ENCODE measurements at regions of chr20 and their contacts with region 1.

Region 1: DNA sequence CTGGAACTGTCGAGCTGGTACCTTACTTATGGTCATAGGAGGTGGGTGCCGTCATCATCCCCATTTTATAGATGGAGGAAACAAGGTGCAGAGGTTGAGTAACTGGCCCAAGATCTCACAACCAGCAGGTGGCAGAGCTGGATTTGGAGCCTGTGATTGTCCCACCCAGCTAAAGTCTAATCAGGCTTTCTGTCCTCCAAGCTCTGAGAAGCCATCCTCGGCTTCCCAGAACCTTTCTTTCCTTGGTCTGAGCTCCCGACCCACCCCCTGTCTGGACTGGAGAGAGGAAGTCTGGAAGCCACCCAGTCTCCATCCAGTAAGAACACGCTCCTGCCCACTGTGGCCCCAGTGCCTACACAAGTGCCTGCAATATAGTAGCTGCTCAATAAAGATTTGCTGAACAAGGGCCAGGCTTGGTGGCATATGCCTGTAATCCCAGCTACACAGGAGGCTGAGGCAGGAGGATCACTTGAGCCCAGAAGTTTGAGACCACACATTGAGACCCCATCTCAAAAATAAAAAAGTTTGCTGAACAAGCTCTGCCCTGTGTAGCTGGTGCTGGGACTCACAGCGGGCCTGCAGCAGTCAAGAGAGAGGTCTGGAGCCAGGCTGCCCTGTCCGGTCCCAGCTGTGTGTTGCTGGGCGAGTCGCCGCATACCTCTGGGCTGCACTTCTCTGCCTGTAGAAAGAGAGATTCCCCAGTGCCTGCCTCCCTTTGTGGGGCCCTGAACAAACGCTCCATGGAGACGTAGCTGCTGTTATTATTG is 32.5 kb upstream of the DLGAP4 start:
- DNase-seq: peak; percentile 27
- ATAC-seq: no peak
- H3K4me3 Mint-ChIP-seq: no peak overlapping the region
- H3K27ac Mint-ChIP-seq: no peak overlapping the region
- H3K4me1 Mint-ChIP-seq: no peaks in the 10 kb centered on the region
- H3K27me3 Mint-ChIP-seq: no peaks in the 10 kb centered on the region

Region 2: DNA sequence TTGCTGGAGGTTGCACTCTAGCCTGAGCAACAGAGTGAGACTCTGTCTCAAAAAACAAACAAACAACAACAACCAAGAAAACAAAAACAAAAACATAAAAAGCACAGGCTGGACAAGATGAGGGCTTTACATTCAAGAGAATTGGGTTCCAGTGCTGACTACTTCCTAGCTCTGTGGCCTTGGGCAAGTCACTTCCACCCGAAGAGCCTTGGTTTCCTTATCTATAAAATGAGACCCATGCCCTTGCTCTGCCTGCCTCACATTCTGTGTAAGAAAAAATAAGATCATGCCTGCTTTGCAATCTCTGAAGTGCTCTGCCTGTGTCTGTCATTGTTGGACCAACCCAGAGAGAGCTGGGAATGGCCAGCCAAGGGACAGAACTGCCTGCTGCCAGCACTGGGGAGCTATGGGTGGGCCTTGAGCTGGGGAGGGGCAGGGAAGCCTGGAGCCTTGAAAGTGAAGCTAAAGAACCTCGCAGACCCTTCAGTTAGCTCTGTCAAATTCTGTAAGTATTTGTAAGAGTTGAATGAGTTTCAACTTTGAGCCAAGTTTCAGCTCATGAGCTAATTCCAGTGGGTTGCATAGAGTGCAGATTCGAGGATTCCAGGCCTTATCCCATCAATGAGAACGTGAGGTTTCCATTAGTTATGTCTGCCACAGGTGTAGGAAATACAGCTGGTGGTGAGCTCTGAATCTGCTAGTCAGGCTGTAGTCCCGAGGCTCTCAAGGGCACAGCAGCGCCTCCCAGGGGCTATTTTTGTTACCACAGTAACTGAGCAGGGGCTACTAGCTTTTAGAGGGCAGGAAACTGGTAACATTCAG is 125.8 kb after region 1 on chr20:
- CTCF ChIA-PET with region 1: interaction called, 12 read pairs
- POLR2A ChIA-PET with region 1: no interaction called
- DNase-seq: peak; percentile 56
- ATAC-seq: peak; percentile 68
- H3K4me3 Mint-ChIP-seq: no peak overlapping the region
- H3K27ac Mint-ChIP-seq: no peak overlapping the region
- H3K4me1 Mint-ChIP-seq: no peaks in the 10 kb centered on the region
- H3K27me3 Mint-ChIP-seq: peaks cover 23% of the 10 kb centered on the region